Activated CD4-positive, alpha-beta T cell treated with anti-CD3 and anti-CD28 coated beads for 36 hours (primary cell): ENCODE measurements at regions of chr3 and their contacts with region 1.

Region 1: GRCh38 chr3:56862352-56863074 is 60.8 kb upstream of the ARHGEF3 start:
- DNase-seq: peak; percentile 41
- ATAC-seq: peak; percentile 70
- H3K4me3 Mint-ChIP-seq: peak overlapping the region; percentile 32
- H3K27ac Mint-ChIP-seq: peak overlapping the region; percentile 85
- H3K4me1 Mint-ChIP-seq: peaks cover 80% of the 10 kb centered on the region
- H3K27me3 Mint-ChIP-seq: no peaks in the 10 kb centered on the region

Region 2: GRCh38 chr3:56042326-56042951 is 820.1 kb before region 1 on chr3:
- CTCF ChIA-PET with region 1: no interaction called
- POLR2A ChIA-PET with region 1: no interaction called
- intact Hi-C with region 1: no loop called
- DNase-seq: no peak
- ATAC-seq: no peak
- H3K4me3 Mint-ChIP-seq: no peak overlapping the region
- H3K27ac Mint-ChIP-seq: no peak overlapping the region
- H3K4me1 Mint-ChIP-seq: no peaks in the 10 kb centered on the region
- H3K27me3 Mint-ChIP-seq: peaks cover 2% of the 10 kb centered on the region

Region 3: GRCh38 chr3:56556908-56557830 is 305.3 kb before region 1 on chr3 and contains the start of gene CCDC66:
- CTCF ChIA-PET with region 1: no interaction called
- POLR2A ChIA-PET with region 1: no interaction called
- intact Hi-C with region 1: loop called in 1 of 2 experiments (anchors 5 kb)
- DNase-seq: peak; percentile 97
- ATAC-seq: peak; percentile 97
- H3K4me3 Mint-ChIP-seq: peak within 1 kb of the TSS; percentile 93
- H3K27ac Mint-ChIP-seq: peak within 1 kb of the TSS; percentile 99
- H3K4me1 Mint-ChIP-seq: peaks cover 20% of the 10 kb centered on the region
- H3K27me3 Mint-ChIP-seq: no peaks in the 10 kb centered on the region
- total RNA-seq, gene CCDC66: 23.5 to 28.5 TPM

Region 4: DNA sequence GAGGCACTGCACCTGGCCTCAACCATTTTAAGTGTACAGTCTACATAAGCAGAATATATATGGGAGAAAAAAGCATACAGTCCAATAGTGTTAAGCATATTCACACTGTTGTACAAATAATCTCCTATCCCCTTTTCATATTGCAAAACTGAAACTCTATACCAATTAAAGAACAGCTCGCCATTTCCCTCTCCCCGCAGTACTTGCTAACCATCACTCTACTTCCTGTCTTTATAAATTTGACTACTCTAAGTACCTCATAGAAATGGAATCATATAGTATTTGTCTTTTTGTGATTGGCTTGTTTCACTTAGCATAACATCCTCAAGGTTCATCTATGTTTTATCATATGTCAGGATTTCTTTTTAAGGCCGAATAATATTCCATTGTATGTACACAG is 157.8 kb before region 1 on chr3:
- CTCF ChIA-PET with region 1: no interaction called
- POLR2A ChIA-PET with region 1: no interaction called
- intact Hi-C with region 1: no loop called
- DNase-seq: no peak
- ATAC-seq: peak; percentile 74
- H3K4me3 Mint-ChIP-seq: no peak overlapping the region
- H3K27ac Mint-ChIP-seq: peak overlapping the region; percentile 4
- H3K4me1 Mint-ChIP-seq: peaks cover 21% of the 10 kb centered on the region
- H3K27me3 Mint-ChIP-seq: no peaks in the 10 kb centered on the region

Region 5: GRCh38 chr3:56783644-56784447 is 78.7 kb before region 1 on chr3:
- CTCF ChIA-PET with region 1: interaction called, 4 read pairs
- POLR2A ChIA-PET with region 1: interaction called, 6 read pairs
- intact Hi-C with region 1: loop called in 1 of 2 experiments (anchors 2 kb)
- DNase-seq: peak; percentile 81
- ATAC-seq: peak; percentile 77
- H3K4me3 Mint-ChIP-seq: peak overlapping the region; percentile 65
- H3K27ac Mint-ChIP-seq: peak overlapping the region; percentile 97
- H3K4me1 Mint-ChIP-seq: peaks cover 98% of the 10 kb centered on the region
- H3K27me3 Mint-ChIP-seq: no peaks in the 10 kb centered on the region

Region 6: GRCh38 chr3:56887402-56888025 is 25.0 kb after region 1 on chr3:
- CTCF ChIA-PET with region 1: interaction called, 5 read pairs
- POLR2A ChIA-PET with region 1: interaction called, 3 read pairs
- intact Hi-C with region 1: loop called in 1 of 2 experiments (anchors 2 kb)
- DNase-seq: peak; percentile 63
- ATAC-seq: peak; percentile 77
- H3K4me3 Mint-ChIP-seq: peak overlapping the region; percentile 22
- H3K27ac Mint-ChIP-seq: peak overlapping the region; percentile 74
- H3K4me1 Mint-ChIP-seq: peaks cover 82% of the 10 kb centered on the region
- H3K27me3 Mint-ChIP-seq: no peaks in the 10 kb centered on the region

Region 7: GRCh38 chr3:56930706-56931105 is 68.2 kb after region 1 on chr3:
- CTCF ChIA-PET with region 1: interaction called, 3 read pairs
- POLR2A ChIA-PET with region 1: no interaction called
- intact Hi-C with region 1: loop called in 1 of 2 experiments (anchors 2 kb)
- DNase-seq: peak; percentile 42
- ATAC-seq: peak; percentile 98
- H3K4me3 Mint-ChIP-seq: peak overlapping the region; percentile 21
- H3K27ac Mint-ChIP-seq: peak overlapping the region; percentile 86
- H3K4me1 Mint-ChIP-seq: peaks cover 73% of the 10 kb centered on the region
- H3K27me3 Mint-ChIP-seq: no peaks in the 10 kb centered on the region

Region 8: DNA sequence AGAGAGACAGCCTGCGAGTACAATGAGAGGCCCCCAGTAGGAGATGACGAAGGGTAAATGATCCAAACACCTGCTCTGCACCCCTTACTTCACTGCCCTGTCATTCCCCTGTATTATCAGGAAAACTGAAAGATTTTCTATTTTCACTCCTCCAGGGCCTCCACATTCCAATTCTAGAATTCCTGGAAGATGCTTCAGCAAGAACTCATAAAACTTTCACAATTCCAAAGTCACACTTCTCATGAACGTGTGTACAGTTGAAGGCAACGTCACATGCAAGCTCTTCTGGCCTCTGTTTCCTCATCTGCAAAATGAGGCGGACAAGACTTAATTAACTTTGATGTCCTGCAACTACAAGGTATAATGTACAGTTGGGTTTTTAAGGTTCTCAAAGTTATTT is 135.2 kb after region 1 on chr3:
- CTCF ChIA-PET with region 1: no interaction called
- POLR2A ChIA-PET with region 1: no interaction called
- intact Hi-C with region 1: no loop called
- DNase-seq: no peak
- ATAC-seq: no peak
- H3K4me3 Mint-ChIP-seq: no peak overlapping the region
- H3K27ac Mint-ChIP-seq: no peak overlapping the region
- H3K4me1 Mint-ChIP-seq: peaks cover 3% of the 10 kb centered on the region
- H3K27me3 Mint-ChIP-seq: no peaks in the 10 kb centered on the region